ENCODE measurements at regions of chr20 and their contacts with region 1.

Region 1: DNA sequence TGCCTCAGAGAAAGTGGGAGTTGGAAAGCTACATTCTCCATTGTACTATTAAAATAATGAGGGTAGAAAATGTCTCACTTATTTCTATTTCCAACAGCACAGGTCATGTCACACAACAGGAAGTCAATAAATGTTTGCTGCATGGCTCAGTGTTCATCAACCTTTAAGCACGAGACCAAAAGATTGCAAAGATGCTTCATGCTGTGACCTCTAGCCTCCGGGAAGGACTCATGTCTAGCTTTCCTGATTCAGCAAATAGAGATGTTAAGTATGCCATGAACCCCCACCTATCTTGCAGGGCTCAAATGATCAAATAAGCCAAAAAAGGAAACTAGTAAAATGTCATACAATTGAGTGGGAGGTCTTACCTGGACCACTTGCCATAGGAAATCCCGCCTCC is 57.4 kb downstream of the NCOA6 start:
- DNase-seq: no peak
- H3K4me3 Mint-ChIP-seq: no peak overlapping the region
- H3K27ac Mint-ChIP-seq: no peak overlapping the region
- H3K4me1 Mint-ChIP-seq: no peaks in the 10 kb centered on the region
- H3K27me3 Mint-ChIP-seq: no peaks in the 10 kb centered on the region

Region 2: GRCh38 chr20:34538671-34539123 is 229.4 kb before region 1 on chr20:
- CTCF ChIA-PET with region 1: interaction called, 105 read pairs
- POLR2A ChIA-PET with region 1: no interaction called
- intact Hi-C with region 1: loop called (anchors 10 kb)
- DNase-seq: peak; percentile 74
- H3K4me3 Mint-ChIP-seq: no peak overlapping the region
- H3K27ac Mint-ChIP-seq: no peak overlapping the region
- H3K4me1 Mint-ChIP-seq: peaks cover 34% of the 10 kb centered on the region
- H3K27me3 Mint-ChIP-seq: no peaks in the 10 kb centered on the region

Region 3: GRCh38 chr20:34709831-34710567 is 58.1 kb before region 1 on chr20:
- CTCF ChIA-PET with region 1: interaction called, 10 read pairs
- POLR2A ChIA-PET with region 1: no interaction called
- intact Hi-C with region 1: loop called (anchors 10 kb)
- DNase-seq: no peak
- H3K4me3 Mint-ChIP-seq: peak overlapping the region; percentile 78
- H3K27ac Mint-ChIP-seq: peak overlapping the region; percentile 81
- H3K4me1 Mint-ChIP-seq: peaks cover 19% of the 10 kb centered on the region
- H3K27me3 Mint-ChIP-seq: no peaks in the 10 kb centered on the region

Region 4: DNA sequence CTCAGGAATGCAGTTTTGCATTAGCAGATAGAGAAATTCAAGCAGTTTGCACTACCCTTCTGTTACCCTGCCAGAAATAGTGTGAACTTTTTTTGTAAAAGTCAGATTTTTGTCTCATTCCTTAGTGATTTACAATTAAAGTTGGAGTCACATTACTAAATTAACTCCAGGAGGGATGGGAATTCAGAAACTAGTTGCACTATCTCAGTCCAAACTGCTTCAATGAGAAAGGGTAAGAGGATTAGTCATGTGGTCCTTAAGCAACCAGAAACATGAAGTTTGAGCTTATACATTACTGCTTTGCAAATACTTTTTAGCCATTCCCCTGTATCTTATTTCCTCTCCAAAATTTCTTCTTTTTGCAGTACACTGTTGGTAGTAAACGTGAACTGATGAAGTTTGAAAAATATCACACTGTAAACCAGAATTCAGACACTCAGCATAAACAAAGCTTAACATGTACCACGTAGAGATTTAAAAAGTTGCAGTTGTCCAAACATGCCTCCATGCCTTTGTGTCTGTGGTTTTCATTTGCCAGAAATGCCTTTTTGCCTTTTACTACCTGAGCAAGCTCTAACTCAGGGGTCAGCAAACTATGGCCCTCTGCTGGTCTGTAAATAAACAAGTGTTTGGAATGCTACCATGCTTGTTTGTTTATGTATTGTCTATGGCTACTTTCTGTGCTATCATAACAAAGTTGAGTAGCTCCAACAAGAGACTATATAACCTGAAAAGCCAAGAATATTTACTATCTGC is 14.2 kb before region 1 on chr20:
- CTCF ChIA-PET with region 1: interaction called, 20 read pairs
- POLR2A ChIA-PET with region 1: no interaction called
- intact Hi-C with region 1: no loop called
- DNase-seq: no peak
- H3K4me3 Mint-ChIP-seq: no peak overlapping the region
- H3K27ac Mint-ChIP-seq: no peak overlapping the region
- H3K4me1 Mint-ChIP-seq: no peaks in the 10 kb centered on the region
- H3K27me3 Mint-ChIP-seq: no peaks in the 10 kb centered on the region

Region 5: DNA sequence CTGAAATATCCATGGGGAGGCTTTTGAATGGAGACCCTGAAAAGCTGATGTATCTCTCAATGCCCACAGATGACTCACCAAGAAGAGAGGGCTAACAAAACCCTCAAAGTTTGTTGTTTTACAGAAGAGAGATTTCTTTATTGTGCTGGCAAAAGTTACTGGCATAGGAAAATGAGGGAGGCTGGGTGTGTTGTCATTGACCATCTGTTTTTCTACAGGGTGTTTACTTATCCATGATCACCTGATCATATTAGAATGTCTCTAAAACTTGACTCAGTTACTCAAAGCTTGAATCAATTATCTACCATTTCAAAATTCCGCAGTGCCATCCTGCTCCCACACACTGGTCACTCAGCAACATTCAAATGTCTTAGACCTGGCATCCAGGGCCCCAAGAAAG is 47.5 kb after region 1 on chr20:
- CTCF ChIA-PET with region 1: interaction called, 12 read pairs
- POLR2A ChIA-PET with region 1: no interaction called
- intact Hi-C with region 1: no loop called
- DNase-seq: no peak
- H3K4me3 Mint-ChIP-seq: no peak overlapping the region
- H3K27ac Mint-ChIP-seq: no peak overlapping the region
- H3K4me1 Mint-ChIP-seq: peaks cover 28% of the 10 kb centered on the region
- H3K27me3 Mint-ChIP-seq: no peaks in the 10 kb centered on the region

Region 6: GRCh38 chr20:35049776-35050352 is 281.8 kb after region 1 on chr20:
- CTCF ChIA-PET with region 1: no interaction called
- POLR2A ChIA-PET with region 1: no interaction called
- intact Hi-C with region 1: no loop called
- DNase-seq: no peak
- H3K4me3 Mint-ChIP-seq: no peak overlapping the region
- H3K27ac Mint-ChIP-seq: peak overlapping the region; percentile 2
- H3K4me1 Mint-ChIP-seq: peaks cover 9% of the 10 kb centered on the region
- H3K27me3 Mint-ChIP-seq: no peaks in the 10 kb centered on the region